ENCODE measurements at regions of chr15 and their contacts with region 1.

Region 1: DNA sequence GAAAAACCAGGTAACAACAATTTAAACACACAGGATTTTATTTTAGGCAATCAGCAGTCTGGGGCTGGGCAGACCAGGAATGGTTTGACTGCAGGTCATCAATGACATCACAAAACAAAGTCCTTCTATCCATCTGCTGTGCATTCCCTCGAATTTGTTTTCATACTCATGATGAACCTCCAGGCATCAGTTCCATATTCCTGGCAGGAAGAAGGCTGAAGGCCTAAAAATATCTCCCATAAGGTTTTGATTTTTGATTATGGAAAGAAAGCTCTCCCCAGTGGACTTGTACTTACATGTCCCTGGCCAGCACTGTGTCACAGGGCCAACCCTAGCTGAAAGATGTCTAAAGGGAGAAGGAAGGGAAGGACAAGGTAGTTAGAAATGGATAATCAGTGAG is 107.4 kb downstream of the PEAK1 start:
- DNase-seq: no peak
- H3K4me3 ChIP-seq: no peak overlapping the region
- H3K27ac ChIP-seq: no peak overlapping the region
- H3K4me1 ChIP-seq: no peaks in the 10 kb centered on the region
- H3K27me3 ChIP-seq: no peaks in the 10 kb centered on the region
- CTCF ChIP-seq: no peak

Region 2: DNA sequence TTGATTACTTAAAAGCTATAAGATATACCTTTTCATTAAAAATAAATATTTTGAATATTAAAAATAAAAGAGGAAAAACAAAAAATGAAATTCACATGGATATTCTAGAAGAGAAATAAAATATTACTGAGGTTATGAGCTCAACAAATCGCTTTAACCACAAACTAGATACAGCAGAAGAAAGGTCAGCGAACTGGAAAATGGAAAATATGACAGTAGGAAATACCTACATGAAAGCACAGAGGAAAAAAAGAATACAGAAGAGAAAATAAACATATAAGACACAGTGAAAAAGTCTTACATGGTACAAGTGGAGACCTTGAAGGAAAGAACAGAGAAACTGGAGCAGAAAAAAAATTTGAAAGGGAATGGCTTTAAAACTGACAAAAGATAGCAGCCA is 440.6 kb before region 1 on chr15:
- CTCF ChIA-PET with region 1: interaction called, 29 read pairs
- POLR2A ChIA-PET with region 1: no interaction called
- intact Hi-C with region 1: no loop called
- DNase-seq: no peak
- H3K4me3 ChIP-seq: no peak overlapping the region
- H3K27ac ChIP-seq: no peak overlapping the region
- H3K4me1 ChIP-seq: no peaks in the 10 kb centered on the region
- H3K27me3 ChIP-seq: no peaks in the 10 kb centered on the region
- CTCF ChIP-seq: no peak

Region 3: DNA sequence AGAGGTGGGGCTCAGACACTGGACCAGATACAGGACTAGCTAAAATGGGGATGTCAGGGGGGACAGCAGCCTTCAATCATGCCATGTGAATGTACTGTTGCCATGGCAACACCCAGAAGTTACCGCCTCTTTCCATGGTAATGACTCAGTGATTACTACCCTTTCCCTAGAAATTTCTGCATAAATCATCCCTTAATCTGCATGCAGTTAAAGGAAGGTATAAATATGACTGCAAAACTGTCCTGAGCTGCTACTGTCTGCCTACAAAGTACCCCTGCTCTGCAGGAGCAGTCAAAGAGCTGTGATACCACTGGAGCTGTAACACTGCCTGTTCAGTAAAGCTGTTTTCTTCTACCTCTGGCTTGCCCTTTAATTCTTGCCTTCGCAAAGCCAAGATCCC is 60.9 kb before region 1 on chr15:
- CTCF ChIA-PET with region 1: interaction called, 22 read pairs
- POLR2A ChIA-PET with region 1: interaction called, 4 read pairs
- intact Hi-C with region 1: no loop called
- DNase-seq: no peak
- H3K4me3 ChIP-seq: no peak overlapping the region
- H3K27ac ChIP-seq: no peak overlapping the region
- H3K4me1 ChIP-seq: no peaks in the 10 kb centered on the region
- H3K27me3 ChIP-seq: no peaks in the 10 kb centered on the region
- CTCF ChIP-seq: no peak

Measured in PC-9 (cell line).